ENCODE measurements at regions of chr13 and their contacts with region 1.

Region 1: DNA sequence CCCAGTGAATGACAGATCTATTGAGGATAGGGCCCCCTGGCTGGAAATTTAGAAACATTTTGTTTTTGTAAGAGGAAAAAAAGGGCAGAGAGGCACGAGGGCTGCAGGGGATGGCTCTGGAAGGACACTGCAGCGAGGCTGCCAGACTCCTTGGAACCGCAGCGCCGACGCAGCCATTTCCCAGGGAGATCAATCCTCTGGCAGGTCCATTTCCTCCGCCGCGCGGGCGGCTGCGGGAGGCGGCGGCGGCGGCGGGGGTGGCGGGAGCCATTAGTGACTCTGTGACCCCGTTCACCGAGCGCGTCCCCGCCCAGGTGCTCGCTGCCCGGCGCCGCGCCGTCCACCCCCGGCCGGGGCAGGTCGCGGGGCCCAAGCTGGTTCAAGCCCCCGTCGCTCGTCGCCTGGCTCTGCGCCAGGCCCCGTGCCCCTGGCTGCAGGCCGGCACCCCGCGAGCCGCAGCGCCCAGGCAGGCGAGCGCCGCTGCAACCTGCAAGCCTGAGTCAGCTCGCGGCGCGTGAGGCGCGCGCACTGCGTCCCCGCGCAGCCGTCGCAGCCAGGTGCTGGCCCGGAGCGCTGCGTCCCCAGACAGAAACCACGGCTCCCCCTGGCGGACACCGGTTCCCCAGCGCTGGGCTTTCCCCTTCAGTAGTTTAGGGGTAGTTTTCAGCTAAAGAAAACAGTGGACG is 192.6 kb downstream of the KATNAL1 start:
- H3K4me3 Mint-ChIP-seq: peak overlapping the region; percentile 63
- H3K27ac Mint-ChIP-seq: peak overlapping the region; percentile 34
- H3K4me1 Mint-ChIP-seq: peaks cover 41% of the 10 kb centered on the region
- H3K27me3 Mint-ChIP-seq: peaks cover 52% of the 10 kb centered on the region

Region 2: DNA sequence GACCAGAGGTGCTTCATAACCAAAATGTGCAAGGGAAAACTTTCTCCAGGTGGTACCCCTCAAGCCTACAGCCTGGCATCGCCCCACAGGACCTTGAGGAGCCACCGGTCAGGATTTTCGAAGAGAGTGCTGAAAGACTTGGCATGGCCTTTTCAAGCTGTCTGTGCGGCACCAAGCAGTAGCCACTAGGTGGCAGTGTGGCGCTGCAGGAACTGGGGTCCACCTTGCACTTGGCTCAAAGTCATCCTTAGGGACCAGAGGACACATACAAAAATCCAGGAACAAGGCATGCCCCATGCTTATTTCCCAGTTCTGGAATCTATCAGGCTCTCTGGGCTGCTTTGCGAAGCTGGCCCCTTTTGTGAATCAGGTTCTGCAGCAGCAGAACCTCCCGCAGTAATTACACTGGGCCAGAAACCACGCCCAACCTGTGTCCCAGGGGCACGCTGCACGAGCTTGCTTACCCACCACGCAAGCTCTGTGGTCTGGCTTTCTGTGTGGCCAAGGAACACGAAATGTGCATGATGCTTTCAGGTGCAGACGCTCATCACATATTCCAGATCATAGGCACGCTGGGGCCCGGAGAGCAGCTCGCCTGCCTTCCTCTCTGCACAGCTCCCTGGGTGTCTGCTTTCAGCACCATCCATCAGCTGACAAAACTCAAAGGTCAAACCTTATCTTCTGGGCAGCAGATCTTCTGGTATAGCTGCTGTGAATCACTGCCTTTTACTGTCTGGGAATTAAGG is 606.4 kb before region 1 on chr13:
- intact Hi-C with region 1: loop called (anchors 2 kb)
- H3K4me3 Mint-ChIP-seq: no peak overlapping the region
- H3K27ac Mint-ChIP-seq: no peak overlapping the region
- H3K4me1 Mint-ChIP-seq: no peaks in the 10 kb centered on the region
- H3K27me3 Mint-ChIP-seq: peaks cover 20% of the 10 kb centered on the region

Region 3: DNA sequence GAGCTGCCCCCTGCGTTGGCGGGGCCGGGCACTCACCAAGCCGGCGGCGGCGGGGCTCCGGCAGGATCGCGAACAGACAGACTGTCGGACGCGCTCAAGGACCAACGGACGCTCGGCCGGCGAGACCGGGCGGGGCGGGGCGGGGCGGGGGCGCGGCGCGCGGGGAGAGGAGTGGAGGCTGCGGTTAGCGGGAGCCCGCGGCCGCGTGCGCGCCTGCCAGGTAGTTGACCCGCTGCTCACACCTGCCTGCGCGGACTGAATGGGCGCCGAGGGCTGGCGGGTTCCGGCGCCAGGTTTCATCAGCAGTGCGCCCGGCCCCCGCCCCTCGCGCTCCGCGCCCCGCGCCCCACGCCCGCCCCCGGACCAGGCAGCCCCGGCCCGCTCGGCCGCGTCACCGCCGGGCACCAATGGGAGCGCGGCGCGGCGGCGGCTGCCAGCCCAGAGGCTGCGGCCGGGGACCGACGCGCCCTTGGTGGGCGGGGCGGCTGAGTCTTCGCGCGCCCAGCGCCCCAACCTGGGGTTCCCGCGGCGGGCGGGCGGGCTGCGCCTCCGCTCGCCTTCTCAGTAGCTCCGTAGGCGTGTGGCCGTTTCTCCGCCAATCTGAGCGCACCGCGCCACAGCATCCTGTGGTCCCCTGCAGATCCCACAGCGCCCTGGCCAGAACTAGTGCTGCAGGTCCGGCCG is 519.2 kb before region 1 on chr13 and contains the start of gene SLC7A1:
- intact Hi-C with region 1: loop called (anchors 10 kb)
- H3K4me3 Mint-ChIP-seq: peak within 1 kb of the TSS; percentile 87
- H3K27ac Mint-ChIP-seq: peak within 1 kb of the TSS; percentile 79
- H3K4me1 Mint-ChIP-seq: peaks cover 41% of the 10 kb centered on the region
- H3K27me3 Mint-ChIP-seq: peaks cover 15% of the 10 kb centered on the region

Region 4: GRCh38 chr13:29771247-29771646 is 343.5 kb before region 1 on chr13:
- intact Hi-C with region 1: loop called (anchors 1 kb)
- H3K4me3 Mint-ChIP-seq: no peak overlapping the region
- H3K27ac Mint-ChIP-seq: no peak overlapping the region
- H3K4me1 Mint-ChIP-seq: no peaks in the 10 kb centered on the region
- H3K27me3 Mint-ChIP-seq: no peaks in the 10 kb centered on the region

Region 5: DNA sequence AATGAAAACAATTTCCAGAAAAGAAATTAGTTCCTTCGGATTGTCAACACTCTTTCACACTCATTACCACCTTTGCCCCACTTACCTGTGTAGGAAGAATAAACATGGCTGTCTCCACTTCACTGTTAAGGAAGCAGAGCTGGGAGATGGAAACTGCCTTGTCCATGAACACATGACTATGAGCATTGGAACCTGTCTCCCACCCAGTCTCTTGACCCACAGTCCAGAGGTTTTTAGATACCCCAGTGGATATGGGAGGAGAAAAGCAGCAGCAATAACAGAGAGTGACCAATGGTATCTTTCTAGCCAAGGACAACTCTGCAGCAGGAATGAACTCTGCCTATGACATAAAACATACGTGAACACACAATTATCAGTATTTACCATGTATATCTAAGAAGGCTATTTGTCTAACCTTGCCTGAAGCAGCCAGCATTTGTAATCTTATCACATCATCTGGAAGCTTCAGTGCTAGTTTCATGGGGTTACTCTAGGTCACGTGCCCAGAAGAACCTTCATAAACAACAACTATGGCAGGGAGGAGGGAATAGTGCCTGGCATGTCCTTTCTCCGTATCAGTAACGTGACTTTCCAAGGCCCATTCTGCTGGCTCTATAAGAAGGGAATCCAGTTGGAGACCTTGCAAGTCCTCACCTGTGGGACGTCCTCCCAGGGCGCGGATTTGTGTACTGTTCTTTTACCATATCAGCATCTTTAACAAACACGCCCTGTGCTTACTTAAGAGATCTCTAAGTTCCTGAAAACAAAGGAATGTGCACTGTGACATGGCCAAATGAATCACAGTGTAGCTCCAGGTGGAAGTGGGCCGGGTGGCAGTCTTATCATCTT is 42.5 kb before region 1 on chr13:
- intact Hi-C with region 1: no loop called
- H3K4me3 Mint-ChIP-seq: no peak overlapping the region
- H3K27ac Mint-ChIP-seq: no peak overlapping the region
- H3K4me1 Mint-ChIP-seq: no peaks in the 10 kb centered on the region
- H3K27me3 Mint-ChIP-seq: no peaks in the 10 kb centered on the region

Measured in dendritic cell treated with granulocyte-macrophage colony-stimulating factor and Interleukin-4, amounts not matched to agents 40 ng/mL and 50 ng/mL, for 4 days (primary cell).